A549 (cell line): ENCODE measurements at regions of chr1 and their contacts with region 1.

Region 1: GRCh38 chr1:161225534-161226319 is at the start of gene TOMM40L:
- DNase-seq: peak; percentile 97 to 99
- ATAC-seq: peak; percentile 93 to 98
- H3K4me3 ChIP-seq: peak within 1 kb of the TSS; percentile 57
- H3K27ac ChIP-seq: peak within 1 kb of the TSS; percentile 72 to 85
- H3K4me1 ChIP-seq: peaks cover 13% of the 10 kb centered on the region
- CTCF ChIP-seq: peak; percentile 49
- EP300 ChIP-seq: no peak
- POLR2A ChIP-seq: peak; percentile 43; the same call in 1 of the 2 replicates
- RAD21 ChIP-seq: peak in 1 of 2 experiments; percentile 40; a peak in 3 of 5 replicates
- polyA plus RNA-seq, gene TOMM40L: 6.3 and 7.0 TPM in 2 replicates

Region 2: GRCh38 chr1:160981584-160982411 is 243.9 kb before region 1 on chr1:
- CTCF ChIA-PET with region 1: no interaction called
- POLR2A ChIA-PET with region 1: no interaction called
- DNase-seq: no peak
- ATAC-seq: no peak; a peak in 2 of 6 replicates
- H3K4me3 ChIP-seq: no peak overlapping the region
- H3K27ac ChIP-seq: no peak overlapping the region
- H3K4me1 ChIP-seq: peaks cover 8% of the 10 kb centered on the region; the same call in 2 of the 3 replicates
- CTCF ChIP-seq: no peak
- EP300 ChIP-seq: no peak
- POLR2A ChIP-seq: no peak
- RAD21 ChIP-seq: no peak

Region 3: DNA sequence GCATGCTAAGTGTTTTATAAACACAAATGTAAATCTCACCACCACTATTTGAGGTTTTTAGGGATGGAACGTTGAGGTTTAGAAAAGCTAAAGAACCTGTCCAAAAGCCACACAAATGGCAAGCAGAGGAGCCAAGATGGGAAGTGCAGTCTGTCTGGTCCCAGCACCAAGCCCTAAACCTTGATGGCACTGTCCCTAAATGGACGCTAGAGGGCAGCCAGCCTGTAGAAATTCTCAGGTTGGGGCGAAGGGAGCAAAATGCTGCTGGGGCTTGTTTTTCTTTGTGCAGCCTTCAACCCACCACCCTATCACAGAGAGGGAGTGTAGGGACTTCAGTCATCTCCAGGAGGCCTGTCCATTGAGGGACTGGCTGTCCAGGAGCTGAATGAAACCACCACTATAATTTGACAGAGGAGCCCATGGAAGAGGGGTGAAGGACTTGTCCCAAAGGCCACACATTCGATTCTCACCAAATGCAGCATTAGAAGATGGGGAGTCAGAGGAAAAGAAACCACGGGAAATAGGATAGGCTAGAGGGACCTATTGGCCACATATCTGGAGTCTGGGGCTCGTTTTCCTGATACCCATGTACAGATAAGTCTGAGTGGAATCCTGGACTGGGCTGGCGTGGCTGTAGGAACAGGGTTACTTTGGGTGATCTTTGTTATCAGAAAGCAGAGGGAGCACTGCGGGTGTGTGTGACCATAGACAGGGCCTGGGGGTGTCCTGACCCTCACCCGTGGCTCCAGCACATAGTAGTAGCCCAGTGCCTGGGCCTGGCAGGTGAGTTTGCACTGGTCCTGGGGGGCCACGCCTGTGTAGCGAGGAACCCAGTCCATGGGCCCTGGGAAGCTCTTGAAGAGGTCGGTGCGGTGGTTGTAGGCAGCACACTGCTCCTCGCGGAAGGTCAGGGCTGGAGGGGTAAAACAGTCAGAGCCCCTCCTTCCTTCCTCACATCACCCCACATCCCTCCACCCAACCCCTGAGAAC is 33.0 kb before region 1 on chr1:
- CTCF ChIA-PET with region 1: interaction called, 60 read pairs
- POLR2A ChIA-PET with region 1: interaction called, 9 read pairs
- DNase-seq: peak; percentile 72 to 84
- ATAC-seq: peak; percentile 88 to 93
- H3K4me3 ChIP-seq: no peak overlapping the region
- H3K27ac ChIP-seq: no peak overlapping the region
- H3K4me1 ChIP-seq: no peaks in the 10 kb centered on the region
- CTCF ChIP-seq: peak; percentile 81
- EP300 ChIP-seq: no peak
- POLR2A ChIP-seq: no peak
- RAD21 ChIP-seq: peak; percentile 62 to 73

Region 4: GRCh38 chr1:161209790-161210409 is 15.8 kb before region 1 on chr1:
- CTCF ChIA-PET with region 1: interaction called, 319 read pairs
- POLR2A ChIA-PET with region 1: interaction called, 10 read pairs
- DNase-seq: peak; percentile 77 to 90
- ATAC-seq: peak; percentile 95 to 98
- H3K4me3 ChIP-seq: no peak overlapping the region
- H3K27ac ChIP-seq: no peak overlapping the region
- H3K4me1 ChIP-seq: 0 out of 3 replicates have a peak, but pooled peaks cover 3% of the 10 kb centered on the region
- CTCF ChIP-seq: peak; percentile 83
- EP300 ChIP-seq: no peak
- POLR2A ChIP-seq: no peak
- RAD21 ChIP-seq: peak; percentile 78 to 79

Region 5: DNA sequence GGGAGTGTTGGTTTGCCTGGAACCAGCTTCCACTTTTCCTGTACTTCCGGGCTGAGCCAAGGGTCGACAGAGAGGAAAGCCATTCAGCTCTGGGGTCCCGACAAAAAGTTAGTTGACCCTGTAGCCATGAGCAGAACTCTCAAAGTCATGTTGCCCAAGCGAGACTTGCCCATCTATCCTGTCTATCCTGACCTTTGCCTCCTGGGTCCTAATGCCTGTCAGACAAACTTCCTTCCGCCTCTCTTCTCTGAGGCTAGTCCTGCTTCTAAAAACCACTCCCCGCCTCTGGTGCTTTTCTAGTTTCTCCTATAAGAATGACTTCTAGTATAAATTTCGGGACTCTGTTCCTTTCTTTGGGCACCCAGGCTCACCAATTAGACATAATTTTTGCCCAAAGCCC is 25.1 kb after region 1 on chr1:
- CTCF ChIA-PET with region 1: interaction called, 46 read pairs
- POLR2A ChIA-PET with region 1: interaction called, 4 read pairs
- DNase-seq: no peak
- ATAC-seq: no peak
- H3K4me3 ChIP-seq: no peak overlapping the region
- H3K27ac ChIP-seq: no peak overlapping the region
- H3K4me1 ChIP-seq: no peaks in the 10 kb centered on the region
- CTCF ChIP-seq: no peak
- EP300 ChIP-seq: no peak
- POLR2A ChIP-seq: no peak
- RAD21 ChIP-seq: no peak

Region 6: DNA sequence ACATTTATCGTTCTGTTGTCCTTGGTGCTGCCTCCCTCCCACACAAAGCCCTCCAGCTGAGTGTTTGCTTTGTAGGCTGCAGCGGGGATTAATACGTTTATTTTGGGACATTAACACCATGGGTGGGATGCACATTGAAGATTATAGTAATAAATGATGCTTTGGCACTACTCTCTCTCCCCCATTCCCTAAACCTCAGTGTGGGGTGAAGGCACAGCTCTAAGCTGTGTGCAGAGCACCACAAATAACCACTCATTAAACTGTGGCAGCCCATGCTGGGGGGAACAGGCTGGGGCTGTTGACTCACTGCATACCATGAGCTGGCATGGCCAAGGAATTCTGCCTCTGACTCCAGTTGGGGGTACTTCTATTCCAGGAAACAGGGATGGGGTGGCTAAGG is 40.5 kb after region 1 on chr1:
- CTCF ChIA-PET with region 1: interaction called, 46 read pairs
- POLR2A ChIA-PET with region 1: no interaction called
- DNase-seq: no peak
- ATAC-seq: peak in 1 of 2 experiments; percentile 71; a peak in 3 of 6 replicates
- H3K4me3 ChIP-seq: no peak overlapping the region
- H3K27ac ChIP-seq: no peak overlapping the region
- H3K4me1 ChIP-seq: peaks cover 13% of the 10 kb centered on the region; the same call in 2 of the 3 replicates
- CTCF ChIP-seq: no peak
- EP300 ChIP-seq: no peak
- POLR2A ChIP-seq: no peak
- RAD21 ChIP-seq: no peak

Region 7: DNA sequence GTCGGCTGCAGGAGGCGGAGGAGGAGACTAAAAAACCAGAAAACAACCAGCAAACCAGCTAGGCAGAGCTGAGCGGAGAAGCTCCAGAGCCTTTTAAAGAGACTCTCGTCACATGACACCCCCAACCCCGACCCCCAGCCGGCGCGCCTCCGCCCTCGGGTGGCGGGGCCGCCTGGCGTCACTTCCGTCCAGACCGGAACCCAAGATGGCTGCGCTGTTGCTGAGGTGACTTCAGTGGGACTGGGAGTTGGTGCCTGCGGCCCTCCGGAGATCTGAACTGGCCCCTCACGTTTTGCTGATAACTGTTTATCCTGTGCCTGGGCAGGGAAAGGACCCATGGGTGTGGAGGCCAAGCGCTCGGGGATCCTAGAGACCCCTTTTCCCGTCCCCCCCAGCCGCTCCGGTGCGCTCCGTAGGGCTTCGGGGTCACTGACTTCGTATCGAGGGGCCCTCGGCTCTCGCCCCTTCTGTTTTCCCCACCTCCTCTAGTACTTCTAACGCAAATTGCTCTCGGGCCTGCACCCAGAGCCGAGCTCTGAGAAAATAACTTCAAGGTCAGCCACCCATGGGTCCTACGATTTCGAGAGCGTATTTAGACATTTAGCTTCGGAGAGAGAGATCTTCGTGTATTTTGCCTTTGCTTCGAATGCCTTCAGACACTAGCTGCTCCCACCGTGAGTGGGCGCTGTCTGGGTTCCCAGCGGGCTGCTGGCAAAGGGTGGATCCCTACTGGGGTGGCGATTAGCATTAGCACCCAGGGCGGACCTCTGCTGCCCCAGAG is 88.7 kb after region 1 on chr1 and contains the start of gene SDHC:
- CTCF ChIA-PET with region 1: interaction called, 13 read pairs
- POLR2A ChIA-PET with region 1: interaction called, 14 read pairs
- DNase-seq: peak; percentile 83 to 92
- ATAC-seq: peak; percentile 98
- H3K4me3 ChIP-seq: peak within 1 kb of the TSS; percentile 59
- H3K27ac ChIP-seq: peak within 1 kb of the TSS; percentile 83 to 96
- H3K4me1 ChIP-seq: peaks cover 7% of the 10 kb centered on the region; the same call in 2 of the 3 replicates
- CTCF ChIP-seq: no peak; the same call in 2 of the 3 replicates
- EP300 ChIP-seq: no peak
- POLR2A ChIP-seq: peak; percentile 94
- RAD21 ChIP-seq: no peak
- polyA plus RNA-seq, gene SDHC: 296 and 353 TPM in 2 replicates

Region 8: DNA sequence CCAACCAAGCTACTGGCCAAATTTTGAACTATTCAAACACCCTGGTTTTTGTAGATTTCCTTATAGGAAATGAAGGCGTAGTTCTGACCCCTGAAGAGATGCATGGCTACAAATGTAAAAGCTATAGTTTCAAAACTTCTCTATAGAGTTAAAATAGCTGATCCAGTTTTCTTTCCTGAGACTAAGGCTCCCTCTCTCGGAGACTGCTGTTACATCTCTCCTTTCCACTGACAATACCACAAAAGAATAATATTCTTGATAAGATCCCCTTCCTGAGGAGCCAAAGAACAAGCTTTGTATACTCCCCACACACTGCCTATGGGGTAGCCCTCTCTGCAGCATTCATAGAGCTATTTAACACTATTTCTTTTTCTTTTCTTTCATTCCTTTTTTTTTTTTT is 148.6 kb after region 1 on chr1:
- CTCF ChIA-PET with region 1: interaction called, 268 read pairs
- POLR2A ChIA-PET with region 1: interaction called, 6 read pairs
- DNase-seq: peak; percentile 23 to 29
- ATAC-seq: peak; percentile 66 to 85; a peak in 5 of 6 replicates
- H3K4me3 ChIP-seq: no peak overlapping the region
- H3K27ac ChIP-seq: no peak overlapping the region
- H3K4me1 ChIP-seq: peaks cover 9% of the 10 kb centered on the region; the same call in 2 of the 3 replicates
- CTCF ChIP-seq: peak; percentile 35; the same call in 2 of the 3 replicates
- EP300 ChIP-seq: no peak
- POLR2A ChIP-seq: no peak
- RAD21 ChIP-seq: peak; percentile 59 to 69; a peak in 4 of 5 replicates